Activated T-helper 1 cell treated with anti-CD3 and anti-CD28 coated beads, Interleukin-12 subunit alpha, Interleukin-12 subunit beta, Interleukin-2, Interleukin-4 antibody, amounts not matched to agents 30 ng/mL and 10 ng/mL and 1 ng/mL, durations not matched to agents 14 hours and 24 hours and 36 hours (primary cell): ENCODE measurements at regions of chr18 and their contacts with region 1.

Region 1: DNA sequence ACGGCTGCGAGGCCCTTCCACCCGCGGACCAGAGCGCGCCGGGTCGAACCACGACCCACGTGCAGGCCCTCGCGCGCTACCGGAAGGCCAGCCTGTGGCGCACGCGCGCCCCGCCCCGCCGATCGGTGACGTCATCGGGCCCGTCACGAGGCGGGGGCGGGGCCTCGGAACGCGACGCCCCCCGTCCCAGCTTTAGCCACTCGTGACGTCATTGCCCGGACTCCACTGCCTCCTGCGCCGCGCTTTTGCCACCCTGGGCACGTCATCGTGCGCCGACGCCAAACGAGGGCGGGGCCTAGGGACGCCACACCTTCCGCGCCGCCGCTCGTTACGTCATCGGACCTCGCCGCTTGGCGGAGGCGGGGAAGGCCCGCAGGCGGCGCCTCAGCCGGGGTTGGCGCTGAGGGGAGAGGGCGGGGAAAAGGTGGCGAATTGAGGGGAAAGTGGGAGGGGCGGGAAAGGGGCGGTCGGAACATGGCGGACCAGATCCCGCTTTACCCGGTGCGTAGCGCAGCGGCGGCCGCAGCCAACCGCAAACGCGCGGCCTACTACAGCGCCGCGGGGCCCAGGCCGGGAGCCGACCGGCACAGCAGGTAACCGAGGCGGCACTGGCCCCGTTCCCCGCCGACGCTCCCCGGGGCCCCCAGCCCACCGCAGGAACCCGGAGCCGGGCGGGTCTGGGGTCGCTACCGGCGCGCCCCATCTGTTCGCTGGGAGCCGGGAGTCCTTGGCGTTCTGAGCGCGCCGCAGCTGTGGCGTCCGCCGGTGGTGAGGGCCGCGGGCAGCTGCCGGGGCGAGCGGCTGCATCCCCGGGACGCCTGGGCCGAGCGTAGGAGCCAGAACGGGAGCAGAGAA is at the start of gene ATP9B:
- DNase-seq: peak; percentile 99
- H3K4me3 Mint-ChIP-seq: peak within 1 kb of the TSS; percentile 89
- H3K27ac Mint-ChIP-seq: peak within 1 kb of the TSS; percentile 98
- H3K4me1 Mint-ChIP-seq: peaks cover 38% of the 10 kb centered on the region
- H3K27me3 Mint-ChIP-seq: peaks cover 9% of the 10 kb centered on the region
- total RNA-seq, gene ATP9B: 26.1 and 31.4 TPM in 2 replicates

Region 2: DNA sequence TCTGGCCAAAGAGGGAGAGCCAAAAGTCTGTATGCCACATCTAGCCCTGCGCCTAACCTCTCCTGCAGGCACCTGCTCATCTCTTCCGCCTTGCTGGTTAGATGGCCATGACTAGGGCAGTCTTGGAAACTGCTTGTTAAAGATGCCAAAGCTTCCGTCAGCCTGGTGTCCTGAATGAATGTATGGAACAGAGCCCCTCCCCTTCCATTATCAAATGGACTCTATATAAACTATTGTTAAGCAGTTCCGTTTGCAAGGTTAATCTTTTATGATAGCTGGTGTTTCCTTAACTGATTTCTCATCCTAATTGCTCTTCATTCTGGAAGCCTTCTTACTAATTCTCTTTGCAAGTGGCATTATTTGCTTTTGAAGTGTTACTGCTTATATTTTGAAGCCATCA is 87.2 kb after region 1 on chr18:
- intact Hi-C with region 1: loop called (anchors 1 kb)
- DNase-seq: no peak
- H3K4me3 Mint-ChIP-seq: no peak overlapping the region
- H3K27ac Mint-ChIP-seq: no peak overlapping the region
- H3K4me1 Mint-ChIP-seq: peaks cover 15% of the 10 kb centered on the region
- H3K27me3 Mint-ChIP-seq: no peaks in the 10 kb centered on the region

Region 3: GRCh38 chr18:79200546-79201268 is 131.5 kb after region 1 on chr18:
- intact Hi-C with region 1: loop called (anchors 5 kb)
- DNase-seq: peak; percentile 18
- H3K4me3 Mint-ChIP-seq: no peak overlapping the region
- H3K27ac Mint-ChIP-seq: peak overlapping the region; percentile 69
- H3K4me1 Mint-ChIP-seq: peaks cover 23% of the 10 kb centered on the region
- H3K27me3 Mint-ChIP-seq: no peaks in the 10 kb centered on the region

Region 4: DNA sequence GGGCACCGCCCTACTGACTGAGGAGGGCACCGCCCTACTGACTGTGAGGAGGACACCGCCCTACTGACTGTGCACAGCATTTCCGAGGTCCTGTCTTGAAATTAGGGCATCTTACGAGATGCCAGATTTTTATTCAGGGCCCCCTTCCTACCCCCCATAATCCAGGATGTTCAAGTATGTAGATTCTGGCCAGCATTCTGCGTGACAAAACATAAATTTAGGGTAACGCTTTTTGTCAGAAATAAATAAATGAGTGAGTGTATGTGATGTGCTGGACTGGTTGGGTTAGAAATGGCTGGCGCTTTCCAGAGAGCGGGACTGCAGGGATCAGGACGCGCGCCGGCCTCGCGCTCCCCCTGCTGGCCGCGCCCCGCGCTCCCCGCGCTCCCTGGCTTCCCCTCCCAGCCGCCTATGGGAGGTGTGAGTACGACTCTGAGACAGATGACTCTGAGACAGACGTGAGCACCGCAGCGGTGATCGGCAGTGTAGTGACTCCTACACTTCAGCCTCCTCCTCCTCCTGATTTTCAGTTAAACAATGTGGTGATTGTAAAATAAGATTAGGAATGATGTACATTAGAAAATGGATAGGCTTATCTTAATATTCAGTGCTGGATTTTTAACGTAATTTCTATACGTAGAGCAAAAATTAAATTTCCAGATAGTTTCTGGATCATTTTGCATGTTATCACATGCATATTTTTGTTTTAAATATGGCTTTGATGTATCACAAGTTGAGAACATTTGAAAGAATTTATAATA is 177.4 kb after region 1 on chr18:
- intact Hi-C with region 1: loop called (anchors 2 kb)
- DNase-seq: peak; percentile 59
- H3K4me3 Mint-ChIP-seq: no peak overlapping the region
- H3K27ac Mint-ChIP-seq: no peak overlapping the region
- H3K4me1 Mint-ChIP-seq: peaks cover 13% of the 10 kb centered on the region
- H3K27me3 Mint-ChIP-seq: peaks cover 2% of the 10 kb centered on the region